Left lung (tissue), 14 donors: ENCODE measurements at regions of chr12 and their contacts with region 1.

Region 1: GRCh38 chr12:64099397-64099796 is 122.7 kb downstream of the KICS2 start:
- DNase-seq: no peak
- ATAC-seq: peak; percentile 64
- H3K4me3 ChIP-seq: no peak overlapping the region
- H3K27ac ChIP-seq: no peak overlapping the region
- H3K4me1 ChIP-seq: no peaks in the 10 kb centered on the region
- H3K27me3 ChIP-seq: no peaks in the 10 kb centered on the region
- CTCF ChIP-seq: no peak

Region 2: DNA sequence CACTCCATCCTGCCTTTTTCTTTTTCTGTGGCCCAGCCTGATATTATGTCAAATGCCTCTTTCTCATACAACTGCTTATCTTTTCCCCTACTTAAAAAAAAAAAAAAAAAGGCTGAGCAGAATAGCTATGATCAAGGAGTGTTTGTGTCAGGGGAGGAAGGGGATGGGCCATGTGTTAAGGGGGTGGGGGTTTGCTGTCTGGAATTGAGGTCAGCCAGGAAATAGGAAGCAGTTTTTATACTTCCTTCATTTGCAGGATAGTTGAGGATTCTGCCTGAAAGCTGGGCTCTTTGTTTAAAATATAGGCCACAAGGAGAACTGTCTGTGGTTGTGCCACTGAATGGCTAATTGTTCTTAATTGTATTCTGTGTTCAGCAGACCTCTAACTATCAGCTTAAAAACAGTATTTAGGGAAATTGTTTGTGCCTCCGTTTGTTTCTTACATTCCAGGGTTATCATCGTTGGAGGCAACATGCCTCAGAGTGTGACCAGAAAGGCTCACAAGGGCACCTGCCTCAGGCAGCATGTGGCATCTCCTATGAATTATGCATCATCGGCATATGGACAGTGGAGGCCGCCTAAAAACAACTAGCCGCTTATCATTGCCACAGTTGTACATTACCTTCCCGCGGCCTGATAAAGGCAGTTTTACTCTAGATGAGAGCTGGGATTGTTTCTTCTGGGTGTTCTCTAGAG is 158.9 kb before region 1 on chr12:
- intact Hi-C with region 1: loop called in 1 of 2 experiments (anchors 10 kb)
- DNase-seq: no peak
- ATAC-seq: peak; percentile 19
- H3K4me3 ChIP-seq: no peak overlapping the region
- H3K27ac ChIP-seq: peak overlapping the region in 1 of 2 donors; percentile 45
- H3K4me1 ChIP-seq: peaks cover 0 to 32% of the 10 kb centered on the region in 2 donors
- H3K27me3 ChIP-seq: no peaks in the 10 kb centered on the region
- CTCF ChIP-seq: no peak